ENCODE measurements at regions of chr4 and their contacts with region 1.

Region 1: GRCh38 chr4:76377911-76378310 is 43.0 kb downstream of the CCDC158 start:
- DNase-seq: no peak
- H3K4me3 Mint-ChIP-seq: no peak overlapping the region
- H3K27ac Mint-ChIP-seq: no peak overlapping the region
- H3K4me1 Mint-ChIP-seq: peaks cover 4% of the 10 kb centered on the region
- H3K27me3 Mint-ChIP-seq: peaks cover 14% of the 10 kb centered on the region

Region 2: GRCh38 chr4:76279472-76279871 is 98.4 kb before region 1 on chr4:
- intact Hi-C with region 1: loop called (anchors 10 kb)
- DNase-seq: no peak
- H3K4me3 Mint-ChIP-seq: no peak overlapping the region
- H3K27ac Mint-ChIP-seq: no peak overlapping the region
- H3K4me1 Mint-ChIP-seq: no peaks in the 10 kb centered on the region
- H3K27me3 Mint-ChIP-seq: peaks cover 20% of the 10 kb centered on the region